ENCODE measurements at regions of chr7 and their contacts with region 1.

Region 1: DNA sequence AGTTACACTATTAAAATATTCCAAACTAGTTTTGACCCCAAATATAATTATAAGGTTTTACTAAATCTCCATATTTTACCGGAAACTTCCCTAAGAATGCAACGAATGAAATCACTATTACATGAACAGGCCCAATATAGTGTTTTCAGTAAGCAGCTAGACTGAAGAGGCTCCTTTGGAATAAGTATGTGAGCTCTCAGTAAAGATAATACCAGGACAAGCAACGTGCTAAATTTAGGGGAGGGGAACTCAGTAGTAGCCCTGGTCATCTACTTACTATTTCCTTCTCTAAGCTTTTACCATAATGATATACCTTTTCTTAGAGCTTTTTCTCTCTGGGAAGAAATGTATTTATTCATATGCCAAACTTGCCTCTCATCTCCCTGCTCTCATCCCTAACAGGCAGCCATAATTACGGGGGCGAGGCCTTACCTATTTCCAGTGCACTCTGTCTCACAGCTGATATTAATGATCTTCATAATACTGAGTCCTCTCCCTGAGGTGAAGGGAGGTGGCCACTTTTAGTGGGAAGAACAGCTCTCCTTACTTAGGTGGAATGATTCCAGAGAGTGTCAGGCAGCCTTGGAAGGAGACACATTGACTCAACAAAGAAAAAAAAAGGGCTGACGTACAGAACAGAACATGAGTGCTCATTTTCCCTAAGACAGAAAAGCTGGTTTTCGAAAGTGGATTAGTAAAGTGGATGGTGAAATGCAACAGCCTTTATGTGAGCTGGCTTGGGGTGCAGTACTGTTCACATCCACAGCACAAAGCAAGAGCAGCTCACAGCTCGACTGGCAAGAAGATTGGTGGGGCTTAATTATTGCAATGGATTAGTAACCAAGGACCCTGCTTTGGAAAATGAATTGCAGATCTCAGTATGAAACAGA is 165.4 kb downstream of the GLI3 start:
- DNase-seq: no peak
- H3K4me3 ChIP-seq: no peak overlapping the region
- H3K27ac ChIP-seq: no peak overlapping the region
- H3K4me1 ChIP-seq: peaks cover 0 to 6% (median 3%) of the 10 kb centered on the region in 4 experiments; a peak in 6 of 7 replicates
- H3K27me3 ChIP-seq: no peaks in the 10 kb centered on the region; a peak in 1 of 7 replicates
- CTCF ChIP-seq: peak in 2 of 3 experiments; percentile 11 to 25; a peak in 2 of 4 replicates
- EP300 ChIP-seq: no peak
- POLR2A ChIP-seq: no peak
- RAD21 ChIP-seq: no peak; a peak in 1 of 4 replicates

Region 2: DNA sequence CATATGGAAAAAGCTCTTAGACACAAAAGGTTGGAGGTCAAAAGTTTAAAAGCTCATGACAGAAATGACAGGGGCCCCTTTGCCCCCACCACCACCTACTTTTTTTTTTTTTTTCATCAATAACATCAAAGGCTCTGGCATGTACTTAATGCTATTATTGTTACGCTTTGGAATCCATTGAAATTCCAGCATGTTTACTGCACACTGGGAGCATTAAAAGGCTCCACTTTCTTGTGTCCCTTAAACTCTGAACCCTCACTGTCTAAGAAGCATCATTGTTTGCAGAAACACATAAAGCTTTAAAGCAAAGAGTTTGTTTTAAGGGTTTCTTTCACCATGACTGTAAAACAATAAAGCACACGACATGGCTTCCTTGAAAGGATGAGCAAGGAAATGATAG is 16.0 kb after region 1 on chr7:
- CTCF ChIA-PET with region 1: interaction called, 10 read pairs
- POLR2A ChIA-PET with region 1: interaction called, 3 read pairs
- DNase-seq: no peak
- H3K4me3 ChIP-seq: no peak overlapping the region
- H3K27ac ChIP-seq: no peak overlapping the region
- H3K4me1 ChIP-seq: peaks cover 9 to 17% (median 13%) of the 10 kb centered on the region in 4 experiments
- H3K27me3 ChIP-seq: peaks cover 36 to 55% (median 49%) of the 10 kb centered on the region in 4 experiments
- CTCF ChIP-seq: no peak
- EP300 ChIP-seq: no peak
- POLR2A ChIP-seq: no peak
- RAD21 ChIP-seq: no peak

Region 3: GRCh38 chr7:43337191-43337590 is 1265.6 kb after region 1 on chr7:
- CTCF ChIA-PET with region 1: no interaction called
- POLR2A ChIA-PET with region 1: no interaction called
- DNase-seq: no peak
- H3K4me3 ChIP-seq: no peak overlapping the region
- H3K27ac ChIP-seq: no peak overlapping the region
- H3K4me1 ChIP-seq: peaks cover 0 to 3% (median 1%) of the 10 kb centered on the region in 4 experiments; a peak in 1 of 7 replicates
- H3K27me3 ChIP-seq: no peaks in the 10 kb centered on the region
- CTCF ChIP-seq: no peak
- EP300 ChIP-seq: no peak
- POLR2A ChIP-seq: no peak
- RAD21 ChIP-seq: no peak